Calu3 (cell line): ENCODE measurements at regions of chr5 and their contacts with region 1.

Region 1: DNA sequence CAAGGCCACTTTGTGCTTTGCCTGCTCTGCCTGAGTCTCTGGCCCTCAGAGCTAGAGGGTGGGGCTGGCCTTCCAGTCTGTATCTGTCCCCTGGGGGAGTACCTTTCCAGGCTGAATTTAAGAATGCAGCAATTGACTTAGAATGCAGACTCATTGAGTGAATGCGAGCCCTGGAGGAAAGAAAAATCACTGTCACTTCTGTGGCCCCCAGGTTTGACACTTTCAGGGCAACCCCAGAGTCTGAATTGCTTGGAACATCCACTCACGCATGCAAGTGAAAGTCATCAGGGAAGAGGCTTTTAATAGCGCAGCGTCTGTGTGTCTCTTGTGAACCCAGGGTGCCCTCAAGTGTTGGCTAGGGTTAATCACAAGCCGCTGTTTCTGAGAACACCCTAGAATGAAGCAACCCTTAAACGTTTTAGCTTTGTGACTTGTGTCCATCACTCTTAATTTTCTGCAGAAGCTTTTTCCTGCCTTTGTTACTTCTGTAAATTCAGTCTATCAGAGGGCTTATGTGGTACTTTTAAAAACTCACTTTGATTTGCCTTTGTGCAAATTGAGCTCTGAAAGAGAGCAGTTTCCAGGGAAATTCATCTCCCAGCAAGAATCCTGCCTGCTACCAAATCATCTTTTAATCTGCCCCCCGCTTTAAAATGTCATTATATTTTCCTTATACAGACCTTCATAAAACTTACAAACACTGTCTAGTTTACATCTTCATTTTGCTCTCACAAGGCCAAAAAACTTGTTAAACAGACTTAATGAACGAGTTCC is 146.8 kb upstream of the IQGAP2 start:
- DNase-seq: peak; percentile 77
- H3K4me3 Mint-ChIP-seq: no peak overlapping the region
- H3K27ac Mint-ChIP-seq: no peak overlapping the region
- H3K4me1 Mint-ChIP-seq: peaks cover 39% of the 10 kb centered on the region
- H3K27me3 Mint-ChIP-seq: peaks cover 13% of the 10 kb centered on the region
- CTCF ChIP-seq: peak; percentile 66

Region 2: DNA sequence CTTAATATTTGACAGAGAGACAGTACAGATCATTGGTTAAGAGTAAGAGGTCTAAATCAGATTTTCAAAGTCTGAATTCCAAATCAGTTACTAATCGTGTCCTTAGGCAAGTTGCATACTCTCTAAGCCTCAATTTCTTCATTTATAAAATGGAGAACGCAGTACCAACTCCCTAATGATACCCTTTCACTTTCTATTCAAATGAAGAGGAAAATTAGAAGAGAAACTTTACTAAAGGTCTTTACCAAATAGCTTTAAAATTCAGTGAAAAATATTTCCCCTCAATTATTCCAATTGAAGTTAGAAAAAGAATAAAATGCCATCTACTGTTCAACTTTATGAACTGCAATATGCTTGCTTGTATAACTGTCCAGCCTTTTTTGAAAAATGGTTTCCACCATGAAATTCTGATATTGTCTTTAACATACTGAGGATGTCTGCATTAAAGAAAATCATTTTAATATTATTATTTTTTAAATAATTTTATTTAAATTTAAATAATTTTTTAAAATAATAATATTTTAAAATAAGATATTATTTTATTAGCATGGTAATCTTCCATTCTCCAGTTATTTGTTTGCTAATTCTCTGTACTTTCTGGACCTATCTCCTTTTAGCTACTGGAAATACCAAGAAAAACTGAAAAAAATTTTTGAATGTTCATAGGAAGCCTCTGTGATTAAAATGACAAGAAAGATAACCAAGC is 575.0 kb before region 1 on chr5:
- CTCF ChIA-PET with region 1: no interaction called
- intact Hi-C with region 1: no loop called
- DNase-seq: no peak
- H3K4me3 Mint-ChIP-seq: no peak overlapping the region
- H3K27ac Mint-ChIP-seq: peak overlapping the region; percentile 33
- H3K4me1 Mint-ChIP-seq: no peaks in the 10 kb centered on the region
- H3K27me3 Mint-ChIP-seq: no peaks in the 10 kb centered on the region
- CTCF ChIP-seq: peak; percentile 56

Region 3: GRCh38 chr5:75734913-75735789 is 521.2 kb before region 1 on chr5:
- CTCF ChIA-PET with region 1: interaction called, 5 read pairs
- intact Hi-C with region 1: loop called (anchors 1 kb)
- DNase-seq: peak; percentile 68
- H3K4me3 Mint-ChIP-seq: no peak overlapping the region
- H3K27ac Mint-ChIP-seq: no peak overlapping the region
- H3K4me1 Mint-ChIP-seq: peaks cover 12% of the 10 kb centered on the region
- H3K27me3 Mint-ChIP-seq: peaks cover 13% of the 10 kb centered on the region
- CTCF ChIP-seq: peak; percentile 64

Region 4: GRCh38 chr5:75940418-75940817 is 315.9 kb before region 1 on chr5:
- CTCF ChIA-PET with region 1: no interaction called
- intact Hi-C with region 1: no loop called
- DNase-seq: no peak
- H3K4me3 Mint-ChIP-seq: no peak overlapping the region
- H3K27ac Mint-ChIP-seq: no peak overlapping the region
- H3K4me1 Mint-ChIP-seq: no peaks in the 10 kb centered on the region
- H3K27me3 Mint-ChIP-seq: peaks cover 58% of the 10 kb centered on the region
- CTCF ChIP-seq: no peak

Region 5: GRCh38 chr5:76074487-76075065 is 181.7 kb before region 1 on chr5:
- CTCF ChIA-PET with region 1: interaction called, 7 read pairs
- intact Hi-C with region 1: loop called (anchors 1 kb)
- DNase-seq: peak; percentile 45
- H3K4me3 Mint-ChIP-seq: no peak overlapping the region
- H3K27ac Mint-ChIP-seq: no peak overlapping the region
- H3K4me1 Mint-ChIP-seq: no peaks in the 10 kb centered on the region
- H3K27me3 Mint-ChIP-seq: peaks cover 95% of the 10 kb centered on the region
- CTCF ChIP-seq: peak; percentile 72

Region 6: GRCh38 chr5:76152161-76152560 is 104.1 kb before region 1 on chr5:
- CTCF ChIA-PET with region 1: no interaction called
- intact Hi-C with region 1: no loop called
- DNase-seq: no peak
- H3K4me3 Mint-ChIP-seq: no peak overlapping the region
- H3K27ac Mint-ChIP-seq: no peak overlapping the region
- H3K4me1 Mint-ChIP-seq: no peaks in the 10 kb centered on the region
- H3K27me3 Mint-ChIP-seq: peaks cover 67% of the 10 kb centered on the region
- CTCF ChIP-seq: no peak

Region 7: GRCh38 chr5:76204719-76205118 is 51.6 kb before region 1 on chr5:
- CTCF ChIA-PET with region 1: no interaction called
- intact Hi-C with region 1: loop called (anchors 5 kb)
- DNase-seq: peak; percentile 62
- H3K4me3 Mint-ChIP-seq: no peak overlapping the region
- H3K27ac Mint-ChIP-seq: no peak overlapping the region
- H3K4me1 Mint-ChIP-seq: peaks cover 11% of the 10 kb centered on the region
- H3K27me3 Mint-ChIP-seq: no peaks in the 10 kb centered on the region
- CTCF ChIP-seq: no peak

Region 8: DNA sequence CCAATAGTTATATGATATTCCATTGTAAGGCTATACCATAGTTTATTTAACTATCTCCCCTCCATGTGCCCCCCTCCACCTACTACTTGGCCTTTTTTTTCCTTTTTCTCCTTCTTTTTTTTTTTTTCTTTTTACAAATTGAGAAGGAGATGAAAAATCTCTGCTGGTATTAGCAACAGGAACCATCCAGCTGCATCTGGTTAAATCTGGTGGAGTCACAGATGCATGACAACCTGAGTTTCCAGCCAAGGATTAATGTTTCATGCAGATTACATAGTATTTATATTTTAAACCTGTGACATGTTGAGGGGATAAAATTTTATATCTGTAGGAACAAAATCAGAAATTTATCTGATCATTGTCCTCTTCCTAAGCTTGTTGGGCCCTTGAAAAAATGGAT is 18.3 kb after region 1 on chr5:
- CTCF ChIA-PET with region 1: no interaction called
- intact Hi-C with region 1: no loop called
- DNase-seq: no peak
- H3K4me3 Mint-ChIP-seq: no peak overlapping the region
- H3K27ac Mint-ChIP-seq: no peak overlapping the region
- H3K4me1 Mint-ChIP-seq: peaks cover 34% of the 10 kb centered on the region
- H3K27me3 Mint-ChIP-seq: no peaks in the 10 kb centered on the region
- CTCF ChIP-seq: no peak

Region 9: GRCh38 chr5:76544268-76544926 is 288.1 kb after region 1 on chr5:
- CTCF ChIA-PET with region 1: interaction called, 6 read pairs
- intact Hi-C with region 1: loop called (anchors 10 kb)
- DNase-seq: peak; percentile 70
- H3K4me3 Mint-ChIP-seq: no peak overlapping the region
- H3K27ac Mint-ChIP-seq: no peak overlapping the region
- H3K4me1 Mint-ChIP-seq: peaks cover 48% of the 10 kb centered on the region
- H3K27me3 Mint-ChIP-seq: peaks cover 18% of the 10 kb centered on the region
- CTCF ChIP-seq: peak; percentile 81